ENCODE measurements at regions of chr1 and their contacts with region 1.

Region 1: DNA sequence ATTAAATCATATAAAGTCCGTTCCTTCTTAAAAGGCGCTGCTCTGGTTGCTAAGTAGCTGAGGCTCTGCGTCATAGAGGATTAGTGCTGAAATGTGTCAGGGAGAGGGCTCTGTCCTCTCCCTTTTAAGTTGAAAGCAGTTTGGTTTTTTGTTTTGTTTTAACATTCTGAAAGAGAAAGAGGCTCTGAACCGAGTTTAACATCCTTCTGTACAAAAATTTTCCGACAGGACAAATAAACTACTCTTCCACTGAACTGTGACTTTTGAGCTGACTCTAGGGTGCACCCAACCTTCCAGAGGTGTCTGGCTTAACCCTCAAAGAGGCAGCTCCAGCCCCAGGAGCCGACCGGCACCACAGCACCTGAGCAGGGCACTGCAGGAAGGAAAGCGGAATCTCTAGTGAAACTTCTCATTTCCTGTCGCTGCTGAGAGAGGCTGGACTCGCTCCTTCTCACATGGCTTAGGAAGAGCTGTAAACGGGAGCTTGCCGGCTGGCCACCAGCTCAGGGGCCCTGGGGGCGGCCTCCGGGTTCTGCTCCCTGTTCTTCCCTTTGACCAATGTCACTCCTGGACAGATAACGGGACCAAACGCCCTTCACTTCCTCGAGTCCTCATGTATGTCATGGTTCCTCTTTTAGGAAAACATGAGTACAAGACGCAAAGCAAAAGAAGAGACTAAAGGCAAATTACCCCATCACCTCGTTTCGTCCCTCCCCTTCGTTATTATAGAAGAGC is 1.2 kb downstream of the VAV3 start:
- DNase-seq: peak; percentile 8 to 83 (median 43)
- ATAC-seq: peak; percentile 73
- H3K4me3 ChIP-seq: peak overlapping the region; percentile 67 to 91
- H3K4me3 Mint-ChIP-seq: peak overlapping the region; percentile 95
- H3K27ac ChIP-seq: peak overlapping the region; percentile 74 to 79
- H3K27ac Mint-ChIP-seq: peak overlapping the region; percentile 93
- H3K4me1 ChIP-seq: peaks cover 15% of the 10 kb centered on the region
- H3K4me1 Mint-ChIP-seq: peaks cover 28% of the 10 kb centered on the region
- H3K27me3 ChIP-seq: no peaks in the 10 kb centered on the region
- H3K27me3 Mint-ChIP-seq: no peaks in the 10 kb centered on the region
- CTCF ChIP-seq: no peak

Region 2: DNA sequence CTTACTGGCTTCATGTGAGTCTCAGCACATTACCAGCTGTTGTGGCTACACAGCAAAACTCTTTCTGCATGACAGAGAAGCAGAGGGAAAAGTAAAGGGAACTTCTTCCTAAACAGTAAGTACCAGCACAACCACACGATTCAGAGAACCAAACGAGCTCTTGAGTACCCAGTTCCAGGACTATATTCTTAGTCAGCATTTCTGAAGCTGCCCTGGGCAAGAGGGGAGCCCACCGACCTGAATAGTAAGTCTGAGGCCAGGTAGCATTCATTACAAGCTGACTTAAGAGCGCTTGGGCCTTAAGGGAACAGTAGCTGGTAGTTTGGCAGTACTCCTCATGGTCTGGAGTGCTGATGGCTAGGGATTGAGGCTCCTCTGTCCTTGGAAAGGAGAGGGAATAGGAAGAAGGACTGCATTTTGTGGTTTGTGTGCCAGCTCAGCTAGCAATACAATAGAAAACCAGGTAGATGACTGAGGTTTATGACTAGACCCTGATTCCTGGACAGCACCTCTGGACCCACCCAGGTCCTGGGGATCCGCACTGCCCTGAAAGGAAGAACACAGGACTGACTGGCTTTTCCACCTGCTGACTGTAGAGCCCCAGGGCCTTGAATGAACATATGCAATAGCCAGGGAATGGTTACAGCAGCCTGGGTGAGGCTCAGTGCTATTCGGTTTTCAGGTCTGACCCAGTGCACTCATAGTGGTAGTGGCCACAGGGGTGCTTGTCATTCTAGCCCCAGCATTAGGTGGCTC is 1304.1 kb before region 1 on chr1:
- CTCF ChIA-PET with region 1: no interaction called
- POLR2A ChIA-PET with region 1: no interaction called
- intact Hi-C with region 1: no loop called
- DNase-seq: no peak
- ATAC-seq: no peak
- H3K4me3 ChIP-seq: no peak overlapping the region
- H3K4me3 Mint-ChIP-seq: no peak overlapping the region
- H3K27ac ChIP-seq: no peak overlapping the region
- H3K27ac Mint-ChIP-seq: no peak overlapping the region
- H3K4me1 ChIP-seq: no peaks in the 10 kb centered on the region
- H3K4me1 Mint-ChIP-seq: no peaks in the 10 kb centered on the region
- H3K27me3 ChIP-seq: no peaks in the 10 kb centered on the region
- H3K27me3 Mint-ChIP-seq: no peaks in the 10 kb centered on the region
- CTCF ChIP-seq: no peak

Region 3: DNA sequence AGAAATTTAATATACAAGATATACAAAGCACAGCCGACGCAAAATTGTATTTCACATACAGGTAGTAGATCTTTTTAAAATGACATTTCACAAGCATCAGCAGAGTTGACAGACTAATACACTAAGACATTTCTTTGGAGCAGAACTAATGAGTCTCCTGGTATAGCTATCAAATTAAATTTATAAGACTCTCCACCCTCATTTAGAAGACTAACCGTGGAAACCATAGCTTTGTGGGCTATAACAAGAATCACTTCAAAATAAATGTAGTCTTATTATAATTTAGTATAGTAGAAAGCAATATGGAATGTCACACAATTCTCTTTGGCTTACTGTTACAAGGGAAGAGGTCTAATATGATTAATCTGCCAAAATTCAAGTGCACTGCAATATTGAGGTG is 203.7 kb before region 1 on chr1:
- CTCF ChIA-PET with region 1: no interaction called
- POLR2A ChIA-PET with region 1: no interaction called
- intact Hi-C with region 1: no loop called
- DNase-seq: no peak
- ATAC-seq: no peak
- H3K4me3 ChIP-seq: no peak overlapping the region
- H3K4me3 Mint-ChIP-seq: no peak overlapping the region
- H3K27ac ChIP-seq: no peak overlapping the region
- H3K27ac Mint-ChIP-seq: no peak overlapping the region
- H3K4me1 ChIP-seq: no peaks in the 10 kb centered on the region
- H3K4me1 Mint-ChIP-seq: no peaks in the 10 kb centered on the region
- H3K27me3 ChIP-seq: no peaks in the 10 kb centered on the region
- H3K27me3 Mint-ChIP-seq: no peaks in the 10 kb centered on the region
- CTCF ChIP-seq: no peak

Region 4: DNA sequence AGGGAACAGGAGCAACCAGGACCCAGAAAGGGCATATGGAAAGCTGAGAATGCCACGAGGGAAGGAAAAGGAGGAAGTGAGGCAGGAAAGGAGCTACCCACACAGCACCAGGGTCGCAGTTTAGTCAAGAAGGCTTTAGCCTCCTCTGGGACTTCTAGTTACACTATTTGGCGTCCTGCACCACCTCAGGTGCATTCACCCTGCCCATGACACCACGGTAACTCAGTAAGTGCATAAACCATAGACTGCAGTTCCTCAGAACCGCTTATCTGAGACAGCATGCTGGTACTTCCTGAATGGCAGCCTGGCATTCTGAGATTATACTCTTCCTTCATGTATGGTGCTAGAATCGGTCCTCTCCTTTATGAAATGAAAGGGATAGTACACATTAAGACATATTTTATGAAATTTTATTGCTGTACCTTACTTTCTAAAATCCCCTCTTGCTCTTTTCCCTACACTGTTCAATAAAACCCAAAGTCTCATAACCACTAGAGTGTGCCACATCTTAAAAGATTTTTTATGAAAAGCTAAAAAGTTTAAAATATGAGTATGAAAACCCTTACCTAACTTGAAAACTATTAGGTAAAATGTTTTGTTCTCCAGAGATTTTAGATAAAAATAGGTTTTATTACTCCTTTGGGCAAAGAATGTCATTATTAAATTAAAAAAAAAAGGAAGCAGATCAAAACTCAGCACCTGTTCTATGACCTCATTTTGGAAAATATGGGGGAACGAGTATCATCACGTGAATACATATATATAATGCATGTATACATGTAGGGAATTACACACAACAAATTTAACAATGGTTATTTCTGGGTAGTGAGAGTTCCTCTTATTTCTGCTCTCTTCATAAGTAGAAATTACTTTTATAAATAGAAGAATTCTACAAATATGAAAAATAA is 66.1 kb before region 1 on chr1:
- CTCF ChIA-PET with region 1: interaction called, 9 read pairs
- POLR2A ChIA-PET with region 1: no interaction called
- intact Hi-C with region 1: loop called in 1 of 2 experiments (anchors 5 kb)
- DNase-seq: peak in 5 of 9 experiments; percentile 3 to 53 (median 40)
- ATAC-seq: peak; percentile 52
- H3K4me3 ChIP-seq: peak overlapping the region in 1 of 2 experiments; percentile 22
- H3K4me3 Mint-ChIP-seq: peak overlapping the region; percentile 64
- H3K27ac ChIP-seq: peak overlapping the region; percentile 14 to 62
- H3K27ac Mint-ChIP-seq: peak overlapping the region; percentile 78
- H3K4me1 ChIP-seq: peaks cover 49% of the 10 kb centered on the region
- H3K4me1 Mint-ChIP-seq: peaks cover 51% of the 10 kb centered on the region
- H3K27me3 ChIP-seq: no peaks in the 10 kb centered on the region
- H3K27me3 Mint-ChIP-seq: no peaks in the 10 kb centered on the region
- CTCF ChIP-seq: no peak

Region 5: DNA sequence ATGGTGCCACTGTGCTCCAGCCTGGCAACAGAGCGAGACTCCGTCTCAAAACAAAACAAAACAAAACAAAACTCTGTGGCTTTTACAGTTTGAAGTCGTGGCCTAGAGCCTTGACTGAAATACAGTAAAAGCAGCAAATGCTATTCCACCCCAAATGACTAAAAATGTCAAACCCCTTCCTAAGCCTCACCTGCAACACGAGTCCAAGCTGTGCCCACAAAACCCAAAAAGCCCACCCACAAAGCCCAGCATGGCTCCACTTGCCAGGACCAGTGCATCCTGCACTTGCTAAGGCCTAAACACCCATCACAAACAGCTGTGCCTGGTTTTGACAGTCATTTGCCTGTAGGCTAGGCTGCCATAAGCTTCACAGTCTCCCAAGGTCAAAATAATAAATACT is 20.1 kb before region 1 on chr1:
- CTCF ChIA-PET with region 1: interaction called, 3 read pairs
- POLR2A ChIA-PET with region 1: interaction called, 6 read pairs
- intact Hi-C with region 1: loop called in 1 of 2 experiments (anchors 2 kb)
- DNase-seq: peak in 2 of 9 experiments; percentile 39 to 57
- ATAC-seq: no peak
- H3K4me3 ChIP-seq: no peak overlapping the region
- H3K4me3 Mint-ChIP-seq: no peak overlapping the region
- H3K27ac ChIP-seq: peak overlapping the region in 1 of 2 experiments; percentile 65
- H3K27ac Mint-ChIP-seq: peak overlapping the region; percentile 34
- H3K4me1 ChIP-seq: peaks cover 17% of the 10 kb centered on the region
- H3K4me1 Mint-ChIP-seq: peaks cover 45% of the 10 kb centered on the region
- H3K27me3 ChIP-seq: no peaks in the 10 kb centered on the region
- H3K27me3 Mint-ChIP-seq: no peaks in the 10 kb centered on the region
- CTCF ChIP-seq: no peak

Region 6: GRCh38 chr1:108057541-108057940 is 93.8 kb after region 1 on chr1:
- CTCF ChIA-PET with region 1: no interaction called
- POLR2A ChIA-PET with region 1: no interaction called
- intact Hi-C with region 1: no loop called
- DNase-seq: no peak
- ATAC-seq: no peak
- H3K4me3 ChIP-seq: no peak overlapping the region
- H3K4me3 Mint-ChIP-seq: no peak overlapping the region
- H3K27ac ChIP-seq: no peak overlapping the region
- H3K27ac Mint-ChIP-seq: no peak overlapping the region
- H3K4me1 ChIP-seq: no peaks in the 10 kb centered on the region
- H3K4me1 Mint-ChIP-seq: no peaks in the 10 kb centered on the region
- H3K27me3 ChIP-seq: no peaks in the 10 kb centered on the region
- H3K27me3 Mint-ChIP-seq: no peaks in the 10 kb centered on the region
- CTCF ChIP-seq: no peak

Region 7: GRCh38 chr1:108118018-108118902 is 154.5 kb after region 1 on chr1:
- CTCF ChIA-PET with region 1: no interaction called
- POLR2A ChIA-PET with region 1: no interaction called
- intact Hi-C with region 1: loop called in 1 of 2 experiments (anchors 5 kb)
- DNase-seq: no peak
- ATAC-seq: no peak
- H3K4me3 ChIP-seq: no peak overlapping the region
- H3K4me3 Mint-ChIP-seq: no peak overlapping the region
- H3K27ac ChIP-seq: no peak overlapping the region
- H3K27ac Mint-ChIP-seq: no peak overlapping the region
- H3K4me1 ChIP-seq: no peaks in the 10 kb centered on the region
- H3K4me1 Mint-ChIP-seq: peaks cover 2% of the 10 kb centered on the region
- H3K27me3 ChIP-seq: no peaks in the 10 kb centered on the region
- H3K27me3 Mint-ChIP-seq: no peaks in the 10 kb centered on the region
- CTCF ChIP-seq: no peak